Mammary epithelial cell (primary cell): ENCODE measurements at regions of chr16 and their contacts with region 1.

Region 1: DNA sequence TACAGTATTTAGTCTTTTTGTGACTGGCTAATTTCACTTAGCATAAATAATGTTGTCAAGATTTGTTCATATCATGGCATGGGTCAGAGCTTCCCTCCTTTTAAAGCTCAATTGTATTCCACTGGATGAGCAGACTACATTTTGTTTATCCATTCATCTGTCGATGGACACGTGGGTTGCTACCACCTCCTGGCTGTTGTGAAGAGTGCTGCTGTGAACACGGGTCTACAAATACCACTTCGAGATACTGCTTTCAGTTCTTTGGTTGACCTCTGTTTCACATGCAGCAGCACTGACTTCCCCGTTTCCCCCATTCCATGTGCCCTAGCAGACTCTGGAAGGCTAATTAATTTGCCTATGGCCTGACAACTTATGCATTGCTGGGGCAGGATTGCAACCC is 285.4 kb downstream of the SHISA9 start:
- DNase-seq: peak; percentile 25
- H3K4me3 ChIP-seq: no peak overlapping the region
- H3K27ac ChIP-seq: no peak overlapping the region
- H3K4me1 ChIP-seq: no peaks in the 10 kb centered on the region
- H3K27me3 ChIP-seq: no peaks in the 10 kb centered on the region
- CTCF ChIP-seq: peak in 1 of 2 donors; percentile 30

Region 2: GRCh38 chr16:12907670-12908233 is 279.1 kb before region 1 on chr16:
- CTCF ChIA-PET with region 1: no interaction called
- dilution Hi-C with region 1: no loop called
- in situ Hi-C with region 1: no loop called
- intact Hi-C with region 1: loop called (anchors 10 kb)
- DNase-seq: no peak
- H3K4me3 ChIP-seq: no peak overlapping the region
- H3K27ac ChIP-seq: no peak overlapping the region
- H3K4me1 ChIP-seq: peaks cover 9% of the 10 kb centered on the region
- H3K27me3 ChIP-seq: no peaks in the 10 kb centered on the region
- CTCF ChIP-seq: peak in 1 of 2 donors; percentile 7

Region 3: DNA sequence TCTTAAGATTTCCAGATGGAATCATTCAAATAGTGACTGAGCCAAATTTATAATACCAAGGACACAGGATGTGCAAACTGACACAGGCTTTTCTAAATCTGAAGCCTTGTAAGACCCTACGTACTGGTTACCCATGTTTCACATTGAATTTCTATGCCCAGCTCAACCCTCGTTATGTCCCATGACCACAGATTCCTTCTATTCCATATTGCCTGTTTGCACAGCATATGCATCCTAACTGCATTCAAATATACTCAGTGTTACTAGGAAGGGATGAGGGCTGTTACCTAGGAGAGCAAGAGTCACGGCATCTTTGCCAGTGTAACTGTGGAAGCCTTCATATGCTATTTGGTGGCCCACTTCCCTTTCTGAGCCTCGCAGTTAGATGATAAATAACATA is 19.8 kb after region 1 on chr16:
- CTCF ChIA-PET with region 1: no interaction called
- dilution Hi-C with region 1: no loop called
- in situ Hi-C with region 1: no loop called
- intact Hi-C with region 1: loop called (anchors 1 kb)
- DNase-seq: no peak
- H3K4me3 ChIP-seq: no peak overlapping the region
- H3K27ac ChIP-seq: no peak overlapping the region
- H3K4me1 ChIP-seq: no peaks in the 10 kb centered on the region
- H3K27me3 ChIP-seq: no peaks in the 10 kb centered on the region
- CTCF ChIP-seq: no peak